ENCODE measurements at regions of chr10 and their contacts with region 1.

Region 1: DNA sequence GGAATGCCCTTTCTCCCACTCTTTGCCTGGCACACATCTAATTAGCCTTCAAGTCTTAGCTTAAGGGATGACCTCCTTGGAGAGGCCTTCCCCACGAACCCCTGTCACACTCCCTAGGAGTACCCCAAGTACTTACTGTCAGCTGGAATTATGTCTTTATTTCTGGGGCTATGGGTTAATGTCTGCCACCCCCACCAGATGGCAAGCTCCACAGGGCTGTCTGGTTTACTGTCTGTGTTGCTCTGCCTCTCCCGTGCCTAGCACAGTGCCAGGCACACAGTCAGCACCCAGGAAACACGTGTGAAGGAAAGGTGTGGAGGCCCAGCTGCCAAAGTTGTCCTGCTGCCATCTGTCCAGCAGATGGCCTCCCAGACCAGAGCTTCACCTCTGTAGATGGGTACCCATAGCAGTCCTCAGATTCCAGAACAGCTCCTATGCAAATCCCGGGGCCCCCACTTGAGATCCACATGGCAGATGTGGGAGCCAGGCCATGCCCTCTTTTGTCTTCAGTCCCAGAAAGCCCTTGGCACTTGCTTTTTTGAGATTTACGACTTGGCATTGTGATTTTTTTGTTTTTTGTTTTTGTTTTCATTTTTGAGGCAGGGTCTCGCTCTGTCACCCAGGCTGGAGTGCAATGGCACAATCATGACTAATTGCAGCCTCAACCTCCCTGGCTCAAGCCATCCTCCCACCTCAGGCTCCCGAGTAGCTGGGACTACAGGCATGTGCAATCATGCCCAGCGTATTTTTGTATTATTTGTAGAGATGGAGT is 17.2 kb upstream of the PALD1 start:
- DNase-seq: peak in 6 of 9 donors; percentile 29 to 52 (median 42)
- ATAC-seq: peak; percentile 69
- H3K4me3 ChIP-seq: no peak overlapping the region
- H3K4me3 Mint-ChIP-seq: peak overlapping the region in 1 of 10 donors; percentile 12
- H3K27ac ChIP-seq: no peak overlapping the region
- H3K27ac Mint-ChIP-seq: peak overlapping the region in 2 of 9 donors; percentile 10 to 66
- H3K4me1 ChIP-seq: no peaks in the 10 kb centered on the region
- H3K4me1 Mint-ChIP-seq: peaks cover 0 to 8% (median 3%) of the 10 kb centered on the region in 7 donors
- H3K27me3 ChIP-seq: peaks cover 0 to 4% of the 10 kb centered on the region in 2 donors
- H3K27me3 Mint-ChIP-seq: peaks cover 23 to 46% (median 38%) of the 10 kb centered on the region in 5 donors

Region 2: DNA sequence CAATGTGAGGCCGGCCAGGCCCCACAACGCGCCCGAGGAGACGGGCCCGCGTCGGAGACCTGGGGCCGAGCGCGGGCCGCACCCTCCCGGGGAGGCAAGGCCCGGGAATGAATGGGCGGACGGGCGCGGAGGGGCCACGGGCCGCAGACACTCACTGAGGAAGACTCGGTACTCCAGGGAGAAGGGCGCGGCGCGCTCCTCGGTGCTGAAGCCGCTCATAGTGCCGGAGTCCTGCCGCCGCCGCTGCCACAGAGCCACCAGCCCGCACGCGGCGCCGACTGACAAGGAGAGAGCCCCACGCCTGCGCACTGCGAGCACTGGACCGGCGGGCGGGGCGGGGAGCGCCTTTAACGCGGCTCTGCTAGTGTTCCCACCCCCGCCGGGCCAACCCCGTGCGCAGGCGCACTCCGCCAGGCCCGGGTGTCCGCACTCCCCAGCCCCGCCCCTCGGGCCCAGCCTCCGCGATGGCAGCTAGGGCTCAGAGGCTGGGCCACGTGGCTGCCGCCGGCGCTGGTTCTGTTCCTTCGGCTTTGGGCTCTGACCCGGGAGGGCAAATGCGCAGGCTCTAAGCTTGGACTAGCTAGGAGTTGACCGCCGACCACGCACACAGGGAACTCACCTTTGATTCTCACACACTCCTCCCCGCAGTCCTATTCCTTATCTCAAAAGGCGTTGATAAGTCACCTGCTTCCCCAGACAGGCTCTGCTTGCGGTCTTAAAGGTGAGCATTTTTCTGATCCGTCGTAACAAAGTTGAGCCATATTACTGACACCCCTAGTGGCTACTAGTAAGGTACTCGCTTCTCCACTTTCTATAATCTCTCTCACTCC is 228.1 kb before region 1 on chr10 and contains the start of gene PPA1:
- CTCF ChIA-PET with region 1: no interaction called
- POLR2A ChIA-PET with region 1: no interaction called
- intact Hi-C with region 1: no loop called
- DNase-seq: peak; percentile 98 to 100 (median 99)
- ATAC-seq: peak; percentile 99
- H3K4me3 ChIP-seq: peak within 1 kb of the TSS; percentile 88
- H3K4me3 Mint-ChIP-seq: peak within 1 kb of the TSS; percentile 74 to 94 (median 87)
- H3K27ac ChIP-seq: peak within 1 kb of the TSS; percentile 84
- H3K27ac Mint-ChIP-seq: peak within 1 kb of the TSS; percentile 79 to 99 (median 92)
- H3K4me1 ChIP-seq: peaks cover 4 to 5% of the 10 kb centered on the region in 2 donors
- H3K4me1 Mint-ChIP-seq: peaks cover 9 to 47% (median 35%) of the 10 kb centered on the region in 7 donors
- H3K27me3 ChIP-seq: no peaks in the 10 kb centered on the region
- H3K27me3 Mint-ChIP-seq: no peaks in the 10 kb centered on the region
- total RNA-seq, gene PPA1: 51.9 to 175 (median 69.6) TPM

Region 3: GRCh38 chr10:70540089-70540788 is 78.8 kb after region 1 on chr10:
- CTCF ChIA-PET with region 1: interaction called, 5 read pairs
- POLR2A ChIA-PET with region 1: no interaction called
- intact Hi-C with region 1: loop called in 1 of 2 experiments (anchors 1 kb)
- DNase-seq: peak in 3 of 9 donors; percentile 15 to 18 (median 17)
- ATAC-seq: peak; percentile 21
- H3K4me3 ChIP-seq: no peak overlapping the region
- H3K4me3 Mint-ChIP-seq: no peak overlapping the region
- H3K27ac ChIP-seq: no peak overlapping the region
- H3K27ac Mint-ChIP-seq: no peak overlapping the region
- H3K4me1 ChIP-seq: no peaks in the 10 kb centered on the region
- H3K4me1 Mint-ChIP-seq: no peaks in the 10 kb centered on the region
- H3K27me3 ChIP-seq: no peaks in the 10 kb centered on the region
- H3K27me3 Mint-ChIP-seq: no peaks in the 10 kb centered on the region

Region 4: DNA sequence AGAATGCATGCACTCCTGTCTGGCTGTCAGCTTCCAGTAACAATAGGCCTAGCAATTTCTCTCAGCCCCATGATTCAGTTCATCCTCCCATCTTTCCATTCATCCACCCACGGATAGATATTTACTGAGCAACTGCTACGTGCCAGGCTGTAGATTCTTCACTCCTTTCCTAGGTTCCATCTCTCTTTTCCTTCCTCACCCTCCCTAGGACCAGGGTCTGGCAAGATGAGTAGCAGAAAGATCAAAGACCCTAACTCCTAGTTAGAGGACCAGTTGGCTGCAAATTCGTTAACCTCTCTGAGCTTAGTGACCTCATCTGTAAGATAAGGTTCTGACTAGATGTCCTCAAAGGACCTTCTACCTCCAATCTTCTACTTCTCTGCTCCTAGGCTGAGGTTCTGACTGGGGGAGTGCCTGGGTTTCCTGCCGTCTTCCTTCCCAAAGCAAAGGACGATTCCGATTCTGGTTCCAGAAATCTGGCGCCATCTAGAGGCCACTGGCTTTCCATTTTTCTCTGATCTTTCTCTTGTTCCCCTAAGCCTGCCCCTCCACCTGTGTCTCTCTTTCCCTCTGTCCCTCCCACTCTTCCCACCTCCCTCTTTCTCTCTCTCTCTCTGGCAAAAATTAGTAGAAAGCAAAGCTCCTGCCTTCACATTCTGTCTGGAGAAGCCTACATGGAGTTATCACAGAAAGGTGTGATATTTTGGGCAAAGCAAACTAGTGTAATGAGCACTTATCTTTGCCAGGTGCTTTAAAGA is 297.5 kb after region 1 on chr10:
- CTCF ChIA-PET with region 1: interaction called, 15 read pairs
- POLR2A ChIA-PET with region 1: no interaction called
- intact Hi-C with region 1: loop called in 1 of 2 experiments (anchors 1 kb)
- DNase-seq: peak; percentile 20 to 70 (median 54)
- ATAC-seq: peak; percentile 58
- H3K4me3 ChIP-seq: no peak overlapping the region
- H3K4me3 Mint-ChIP-seq: peak overlapping the region in 1 of 10 donors; percentile 38
- H3K27ac ChIP-seq: no peak overlapping the region
- H3K27ac Mint-ChIP-seq: peak overlapping the region in 1 of 9 donors; percentile 28
- H3K4me1 ChIP-seq: no peaks in the 10 kb centered on the region
- H3K4me1 Mint-ChIP-seq: peaks cover 0 to 10% (median 0%) of the 10 kb centered on the region in 7 donors
- H3K27me3 ChIP-seq: no peaks in the 10 kb centered on the region
- H3K27me3 Mint-ChIP-seq: peaks cover 0 to 2% (median 0%) of the 10 kb centered on the region in 5 donors

Region 5: DNA sequence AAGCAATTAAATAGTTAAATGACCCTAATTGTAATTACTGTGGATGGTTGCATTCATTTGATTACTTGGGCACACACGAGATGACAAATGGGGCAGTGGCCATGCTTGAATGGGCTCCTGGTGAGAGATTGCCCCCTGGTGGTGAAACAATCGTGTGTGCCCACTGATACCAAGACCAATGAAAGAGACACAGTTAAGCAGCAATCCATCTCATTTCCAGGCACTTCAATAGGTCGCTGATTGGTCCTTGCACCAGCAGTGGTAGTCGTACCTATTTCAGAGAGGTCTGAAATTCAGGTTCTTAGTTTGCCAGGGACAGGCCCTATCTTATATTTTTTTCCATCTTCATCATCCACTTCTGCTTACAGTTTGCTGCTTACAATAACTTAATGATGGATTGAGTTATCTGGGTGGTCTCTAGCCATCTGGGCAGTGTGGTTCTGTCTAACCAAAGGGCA is 418.7 kb after region 1 on chr10:
- CTCF ChIA-PET with region 1: interaction called, 3 read pairs
- POLR2A ChIA-PET with region 1: no interaction called
- intact Hi-C with region 1: loop called (anchors 1 kb)
- DNase-seq: peak; percentile 39 to 79 (median 65)
- ATAC-seq: peak; percentile 90
- H3K4me3 ChIP-seq: no peak overlapping the region
- H3K4me3 Mint-ChIP-seq: no peak overlapping the region
- H3K27ac ChIP-seq: no peak overlapping the region
- H3K27ac Mint-ChIP-seq: no peak overlapping the region
- H3K4me1 ChIP-seq: no peaks in the 10 kb centered on the region
- H3K4me1 Mint-ChIP-seq: peaks cover 0 to 8% (median 3%) of the 10 kb centered on the region in 7 donors
- H3K27me3 ChIP-seq: no peaks in the 10 kb centered on the region
- H3K27me3 Mint-ChIP-seq: no peaks in the 10 kb centered on the region